Gastrocnemius medialis (tissue), 4 donors: ENCODE measurements at regions of chr17 and their contacts with region 1.

Region 1: GRCh38 chr17:35242805-35243560 is at the start of gene SLFN5:
- DNase-seq: peak; percentile 97
- ATAC-seq: peak; percentile 84 to 85
- H3K4me3 ChIP-seq: peak within 1 kb of the TSS; percentile 68 to 85 (median 78)
- H3K27ac ChIP-seq: peak within 1 kb of the TSS; percentile 93 to 97 (median 96)
- H3K4me1 ChIP-seq: peaks cover 40 to 47% of the 10 kb centered on the region in 2 donors
- H3K27me3 ChIP-seq: no peaks in the 10 kb centered on the region
- CTCF ChIP-seq: no peak
- POLR2A ChIP-seq: peak; percentile 97 to 99
- total RNA-seq, gene SLFN5: 25.3 to 79.3 (median 37.4) TPM

Region 2: GRCh38 chr17:34645594-34645993 is 597.4 kb before region 1 on chr17:
- in situ Hi-C with region 1: no loop called
- intact Hi-C with region 1: no loop called
- DNase-seq: no peak
- ATAC-seq: no peak
- H3K4me3 ChIP-seq: no peak overlapping the region
- H3K27ac ChIP-seq: no peak overlapping the region
- H3K4me1 ChIP-seq: no peaks in the 10 kb centered on the region
- H3K27me3 ChIP-seq: peaks cover 0 to 4% (median 0%) of the 10 kb centered on the region in 3 donors
- CTCF ChIP-seq: no peak
- POLR2A ChIP-seq: no peak

Region 3: DNA sequence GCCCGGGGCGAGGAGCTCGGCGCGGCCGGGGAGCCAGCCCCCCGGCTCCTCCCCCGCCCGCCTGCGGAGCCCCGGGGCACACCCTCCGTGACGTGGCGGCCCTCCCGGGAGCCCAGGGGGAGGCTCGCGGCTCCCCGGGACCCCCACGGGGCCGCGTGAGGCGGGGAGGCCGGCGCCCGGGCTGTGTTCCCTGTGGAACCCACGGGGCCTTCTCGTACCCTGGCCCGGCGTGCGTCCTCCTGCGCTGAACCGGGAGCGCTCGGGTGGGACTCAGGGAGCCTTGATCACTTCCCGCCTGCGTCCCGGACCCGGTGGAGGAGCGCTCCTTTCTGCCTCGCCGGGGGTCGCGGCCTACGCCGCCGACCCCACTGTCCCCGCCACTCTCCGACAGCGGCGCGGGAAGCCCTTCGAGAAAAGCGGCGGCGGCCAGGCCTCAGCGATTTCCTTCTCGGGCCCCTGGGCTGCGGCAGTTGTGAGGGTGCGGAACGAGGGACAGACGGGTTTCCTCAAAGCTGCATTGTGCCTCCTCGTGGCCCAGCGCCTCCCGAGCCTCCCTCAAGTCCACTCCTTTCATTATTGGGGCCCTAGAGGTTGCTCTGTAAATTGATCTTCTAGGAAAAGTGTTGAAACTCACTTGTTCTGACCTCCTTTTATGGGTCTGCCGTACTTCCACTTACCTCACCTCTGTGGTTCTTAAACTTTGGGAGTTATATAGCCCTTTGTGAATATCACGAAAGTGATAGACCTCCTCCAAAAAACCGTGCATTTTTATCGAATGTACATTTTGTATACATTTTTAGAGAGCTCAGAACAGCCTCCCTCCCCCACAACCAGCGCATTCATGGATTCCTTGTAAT is 262.1 kb before region 1 on chr17:
- in situ Hi-C with region 1: no loop called
- intact Hi-C with region 1: loop called (anchors 10 kb)
- DNase-seq: peak; percentile 47 to 53
- ATAC-seq: peak; percentile 89 to 93
- H3K4me3 ChIP-seq: peak overlapping the region; percentile 81 to 99 (median 86)
- H3K27ac ChIP-seq: peak overlapping the region; percentile 92 to 98 (median 96)
- H3K4me1 ChIP-seq: peaks cover 16 to 30% of the 10 kb centered on the region in 2 donors
- H3K27me3 ChIP-seq: no peaks in the 10 kb centered on the region
- CTCF ChIP-seq: peak in 1 of 5 experiments; percentile 30
- POLR2A ChIP-seq: no peak

Region 4: GRCh38 chr17:35148144-35148543 is 94.8 kb before region 1 on chr17:
- in situ Hi-C with region 1: loop called in 2 of 4 experiments (anchors 10 kb)
- intact Hi-C with region 1: loop called (anchors 1 kb)
- DNase-seq: peak in 1 of 2 donors; percentile 41
- ATAC-seq: peak; percentile 29 to 35
- H3K4me3 ChIP-seq: peak overlapping the region; percentile 53 to 64 (median 60)
- H3K27ac ChIP-seq: peak overlapping the region; percentile 94 to 98 (median 97)
- H3K4me1 ChIP-seq: peaks cover 23 to 39% of the 10 kb centered on the region in 2 donors
- H3K27me3 ChIP-seq: no peaks in the 10 kb centered on the region
- CTCF ChIP-seq: peak in 1 of 5 experiments; percentile 5
- POLR2A ChIP-seq: no peak

Region 5: DNA sequence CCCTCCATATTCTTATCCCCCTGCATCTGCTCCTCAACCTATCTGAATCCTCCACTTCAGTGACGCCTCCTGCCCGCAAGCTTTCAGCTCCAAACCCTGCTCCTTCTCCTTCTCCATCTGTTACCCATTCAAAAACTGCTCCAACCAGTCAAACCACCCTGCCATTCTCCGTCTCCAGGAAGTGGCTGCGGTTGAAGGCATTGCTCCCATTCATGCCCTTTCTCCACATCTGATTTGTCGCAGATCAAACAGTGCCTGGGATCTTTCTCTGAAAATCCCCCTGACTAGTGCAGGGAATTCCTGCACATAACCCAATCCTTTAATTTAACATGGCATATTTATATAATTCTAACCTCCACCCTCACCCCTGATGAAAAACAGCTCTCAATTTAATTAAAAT is 56.1 kb after region 1 on chr17:
- in situ Hi-C with region 1: no loop called
- intact Hi-C with region 1: no loop called
- DNase-seq: no peak
- ATAC-seq: no peak
- H3K4me3 ChIP-seq: no peak overlapping the region
- H3K27ac ChIP-seq: no peak overlapping the region
- H3K4me1 ChIP-seq: no peaks in the 10 kb centered on the region
- H3K27me3 ChIP-seq: no peaks in the 10 kb centered on the region
- CTCF ChIP-seq: no peak
- POLR2A ChIP-seq: no peak

Region 6: GRCh38 chr17:35345926-35346771 is 103.2 kb after region 1 on chr17:
- in situ Hi-C with region 1: loop called in 1 of 4 experiments (anchors 25 kb)
- intact Hi-C with region 1: no loop called
- DNase-seq: peak; percentile 50 to 58
- ATAC-seq: peak; percentile 84 to 86
- H3K4me3 ChIP-seq: peak overlapping the region; percentile 48 to 67 (median 51)
- H3K27ac ChIP-seq: peak overlapping the region; percentile 65 to 74 (median 70)
- H3K4me1 ChIP-seq: peaks cover 9 to 22% of the 10 kb centered on the region in 2 donors
- H3K27me3 ChIP-seq: peaks cover 11 to 26% (median 25%) of the 10 kb centered on the region in 3 donors
- CTCF ChIP-seq: peak in 1 of 5 experiments; percentile 5
- POLR2A ChIP-seq: peak in 1 of 2 donors; percentile 19

Region 7: GRCh38 chr17:35387496-35387895 is 144.5 kb after region 1 on chr17:
- in situ Hi-C with region 1: no loop called
- intact Hi-C with region 1: no loop called
- DNase-seq: no peak
- ATAC-seq: no peak
- H3K4me3 ChIP-seq: no peak overlapping the region
- H3K27ac ChIP-seq: no peak overlapping the region
- H3K4me1 ChIP-seq: no peaks in the 10 kb centered on the region
- H3K27me3 ChIP-seq: no peaks in the 10 kb centered on the region
- CTCF ChIP-seq: no peak
- POLR2A ChIP-seq: no peak

Region 8: GRCh38 chr17:35587074-35587971 is 344.3 kb after region 1 on chr17 and contains the start of gene AP2B1:
- in situ Hi-C with region 1: no loop called
- intact Hi-C with region 1: loop called (anchors 5 kb)
- DNase-seq: peak; percentile 82 to 94
- ATAC-seq: peak; percentile 97 to 98
- H3K4me3 ChIP-seq: peak within 1 kb of the TSS; percentile 78 to 96 (median 83)
- H3K27ac ChIP-seq: peak within 1 kb of the TSS; percentile 88 to 97 (median 92)
- H3K4me1 ChIP-seq: peaks cover 26 to 27% of the 10 kb centered on the region in 2 donors
- H3K27me3 ChIP-seq: no peaks in the 10 kb centered on the region
- CTCF ChIP-seq: peak in 2 of 5 experiments; percentile 39 to 42
- POLR2A ChIP-seq: peak; percentile 65 to 74
- total RNA-seq, gene AP2B1: 31.3 to 48.7 (median 38.1) TPM